Calu3 (cell line): ENCODE measurements at regions of chr4 and their contacts with region 1.

Region 1: DNA sequence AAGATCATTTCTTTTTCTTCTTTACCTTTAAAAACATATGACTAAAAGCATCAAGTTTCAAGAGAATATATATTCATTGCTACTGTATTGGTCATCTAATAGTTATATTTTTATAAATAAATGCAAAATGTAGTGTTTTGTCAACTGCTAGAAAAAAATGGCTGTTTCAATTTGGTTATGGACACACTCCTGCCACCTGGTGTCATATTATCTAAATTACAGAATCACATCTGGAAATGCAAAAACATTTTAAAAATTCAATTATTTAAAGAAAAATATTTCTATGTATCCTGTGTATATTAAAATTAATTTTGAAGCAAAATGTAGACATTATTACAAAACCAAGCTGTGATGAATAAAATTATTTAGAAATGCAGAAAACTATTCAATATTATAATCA is 329.4 kb upstream of the PCDH18 start:
- DNase-seq: no peak
- H3K4me3 Mint-ChIP-seq: no peak overlapping the region
- H3K27ac Mint-ChIP-seq: no peak overlapping the region
- H3K4me1 Mint-ChIP-seq: no peaks in the 10 kb centered on the region
- H3K27me3 Mint-ChIP-seq: no peaks in the 10 kb centered on the region
- CTCF ChIP-seq: no peak

Region 2: DNA sequence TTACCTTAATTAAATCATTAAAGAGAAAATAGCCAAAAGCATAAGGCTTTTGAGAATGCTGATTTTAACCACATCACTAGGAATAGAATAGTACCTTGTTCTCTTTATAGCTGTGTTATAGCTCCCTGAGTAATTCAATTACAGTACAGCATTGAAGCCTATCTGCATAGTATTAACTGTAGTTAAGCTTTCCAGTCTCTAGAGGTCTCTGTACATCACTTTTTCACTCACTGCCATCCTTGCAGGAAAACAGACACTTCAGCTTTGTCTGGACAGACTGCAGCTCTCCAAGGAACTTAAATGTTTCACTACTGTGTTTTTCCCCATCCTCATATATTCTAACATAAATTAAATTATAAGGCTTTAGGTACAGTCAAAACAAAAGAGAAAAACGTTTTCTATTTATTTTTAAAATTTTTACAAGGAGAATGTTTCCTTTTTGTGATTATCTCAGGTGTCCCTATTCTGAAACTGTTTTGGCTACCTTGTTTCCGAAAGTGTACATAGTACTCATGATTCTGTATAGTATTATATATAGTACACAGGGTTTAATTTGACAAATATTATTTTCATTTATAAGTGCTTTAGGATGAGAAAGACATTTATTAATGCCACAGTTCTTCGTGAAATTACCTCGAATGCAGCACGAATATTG is 737.3 kb before region 1 on chr4:
- CTCF ChIA-PET with region 1: no interaction called
- intact Hi-C with region 1: loop called (anchors 5 kb)
- DNase-seq: no peak
- H3K4me3 Mint-ChIP-seq: peak overlapping the region; percentile 64
- H3K27ac Mint-ChIP-seq: peak overlapping the region; percentile 59
- H3K4me1 Mint-ChIP-seq: peaks cover 8% of the 10 kb centered on the region
- H3K27me3 Mint-ChIP-seq: no peaks in the 10 kb centered on the region
- CTCF ChIP-seq: no peak

Region 3: GRCh38 chr4:137226898-137227297 is 634.8 kb before region 1 on chr4:
- CTCF ChIA-PET with region 1: no interaction called
- intact Hi-C with region 1: loop called (anchors 10 kb)
- DNase-seq: peak; percentile 8
- H3K4me3 Mint-ChIP-seq: no peak overlapping the region
- H3K27ac Mint-ChIP-seq: no peak overlapping the region
- H3K4me1 Mint-ChIP-seq: no peaks in the 10 kb centered on the region
- H3K27me3 Mint-ChIP-seq: no peaks in the 10 kb centered on the region
- CTCF ChIP-seq: no peak

Region 4: GRCh38 chr4:137674066-137674465 is 187.6 kb before region 1 on chr4:
- CTCF ChIA-PET with region 1: no interaction called
- intact Hi-C with region 1: no loop called
- DNase-seq: no peak
- H3K4me3 Mint-ChIP-seq: no peak overlapping the region
- H3K27ac Mint-ChIP-seq: no peak overlapping the region
- H3K4me1 Mint-ChIP-seq: no peaks in the 10 kb centered on the region
- H3K27me3 Mint-ChIP-seq: no peaks in the 10 kb centered on the region
- CTCF ChIP-seq: no peak

Region 5: DNA sequence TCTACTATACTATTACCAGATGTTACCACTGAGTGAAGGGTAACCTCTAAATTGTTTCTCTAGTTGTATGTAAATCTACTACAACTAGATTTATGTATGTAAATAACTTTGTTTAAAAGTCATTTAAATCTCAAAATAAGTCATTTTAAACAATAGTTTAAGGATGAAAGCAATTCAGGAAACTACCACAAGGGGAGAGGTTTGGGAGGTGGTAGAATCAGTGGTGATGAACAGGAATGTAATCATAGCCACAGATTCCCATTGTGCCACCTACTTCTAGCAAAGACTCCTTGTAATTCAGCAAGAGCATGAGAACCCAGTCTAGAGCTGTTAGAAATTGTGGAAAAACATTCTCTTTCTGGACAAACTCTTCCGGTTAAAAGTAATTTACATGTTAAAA is 145.9 kb after region 1 on chr4:
- CTCF ChIA-PET with region 1: no interaction called
- intact Hi-C with region 1: no loop called
- DNase-seq: no peak
- H3K4me3 Mint-ChIP-seq: no peak overlapping the region
- H3K27ac Mint-ChIP-seq: no peak overlapping the region
- H3K4me1 Mint-ChIP-seq: no peaks in the 10 kb centered on the region
- H3K27me3 Mint-ChIP-seq: no peaks in the 10 kb centered on the region
- CTCF ChIP-seq: no peak